ENCODE measurements at regions of chr9 and their contacts with region 1.

Region 1: DNA sequence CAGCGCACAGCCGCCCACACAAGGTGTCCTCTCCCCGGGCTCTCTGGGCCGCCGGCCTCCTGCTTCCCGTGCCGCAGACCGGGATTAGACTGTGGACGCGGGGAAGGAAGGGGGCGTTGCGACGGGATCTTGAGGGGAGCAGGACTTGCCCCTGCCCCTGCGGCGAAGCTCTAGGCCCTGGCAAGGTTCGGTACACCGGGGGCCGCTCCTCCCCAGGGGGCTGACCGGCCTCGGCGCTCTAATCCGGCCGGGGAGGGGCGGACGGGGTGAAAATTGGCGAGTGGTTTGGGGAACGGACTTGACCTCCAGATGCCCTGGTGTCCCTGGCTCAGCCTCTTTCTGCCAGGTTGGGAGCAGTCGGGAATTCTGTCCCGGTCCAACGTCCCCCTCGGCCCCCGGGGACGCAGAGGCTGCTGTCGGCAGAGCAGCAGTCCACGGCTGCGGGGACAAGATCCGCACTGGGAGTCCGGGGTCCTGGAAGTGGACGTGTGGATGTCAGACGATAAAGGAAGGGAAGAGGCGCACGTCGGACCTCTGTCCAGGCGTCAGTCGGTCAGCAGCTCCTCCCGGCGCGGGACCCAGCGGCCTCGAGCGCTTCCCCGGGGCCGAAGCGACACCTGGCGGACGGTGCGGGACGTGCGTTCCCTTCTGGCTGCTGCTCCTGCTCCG is 1.9 kb upstream of the CNTFR start:
- DNase-seq: peak; percentile 80 to 82
- H3K4me3 ChIP-seq: peak overlapping the region in 1 of 3 donors; percentile 18
- H3K27ac ChIP-seq: peak overlapping the region; percentile 34 to 62 (median 50)
- H3K4me1 ChIP-seq: peaks cover 12 to 39% of the 10 kb centered on the region in 2 donors
- H3K27me3 ChIP-seq: no peaks in the 10 kb centered on the region
- CTCF ChIP-seq: peak; percentile 63 to 93 (median 85)
- POLR2A ChIP-seq: no peak

Region 2: DNA sequence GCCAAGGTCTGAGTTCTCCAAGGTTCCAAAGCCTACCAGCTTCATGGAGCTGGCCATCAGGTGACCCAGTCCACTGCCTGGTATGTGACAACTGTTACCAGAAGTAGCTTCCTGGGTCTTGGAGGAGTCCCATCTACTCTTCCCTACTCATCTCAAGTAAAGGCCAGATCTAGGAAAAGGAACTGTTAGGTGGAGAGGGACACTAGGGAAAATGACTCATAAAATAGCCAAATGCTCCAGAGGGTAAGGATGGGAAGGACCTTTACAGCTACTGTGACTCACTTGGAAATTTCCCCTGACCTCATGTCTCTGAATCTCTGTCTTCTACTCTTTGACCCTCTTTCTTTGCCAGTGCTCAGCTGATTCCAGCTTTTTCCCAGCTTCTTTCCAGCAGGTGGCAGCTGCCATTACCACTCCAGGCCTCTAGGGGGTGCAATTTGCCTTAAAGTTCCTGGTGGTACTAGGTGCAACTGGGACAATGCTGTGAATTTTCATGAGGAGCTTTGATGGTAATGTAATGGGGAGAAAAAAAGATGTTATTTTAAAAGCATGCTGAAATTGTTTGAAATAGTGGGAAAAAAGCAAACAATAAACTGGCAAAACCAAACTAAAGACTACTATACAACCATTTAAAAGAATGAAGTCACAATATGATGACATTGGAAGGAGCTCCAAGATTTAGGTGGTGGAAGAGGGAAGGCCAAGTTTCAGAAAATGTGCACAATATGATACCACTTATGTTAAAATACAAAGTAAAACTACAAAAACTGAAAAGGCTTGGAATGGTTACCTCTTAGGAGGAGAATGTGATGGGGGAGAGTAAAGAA is 187.6 kb before region 1 on chr9:
- intact Hi-C with region 1: loop called (anchors 5 kb)
- DNase-seq: peak; percentile 68 to 71
- H3K4me3 ChIP-seq: no peak overlapping the region
- H3K27ac ChIP-seq: no peak overlapping the region
- H3K4me1 ChIP-seq: no peaks in the 10 kb centered on the region
- H3K27me3 ChIP-seq: no peaks in the 10 kb centered on the region
- CTCF ChIP-seq: peak; percentile 79 to 96 (median 88)
- POLR2A ChIP-seq: no peak

Region 3: DNA sequence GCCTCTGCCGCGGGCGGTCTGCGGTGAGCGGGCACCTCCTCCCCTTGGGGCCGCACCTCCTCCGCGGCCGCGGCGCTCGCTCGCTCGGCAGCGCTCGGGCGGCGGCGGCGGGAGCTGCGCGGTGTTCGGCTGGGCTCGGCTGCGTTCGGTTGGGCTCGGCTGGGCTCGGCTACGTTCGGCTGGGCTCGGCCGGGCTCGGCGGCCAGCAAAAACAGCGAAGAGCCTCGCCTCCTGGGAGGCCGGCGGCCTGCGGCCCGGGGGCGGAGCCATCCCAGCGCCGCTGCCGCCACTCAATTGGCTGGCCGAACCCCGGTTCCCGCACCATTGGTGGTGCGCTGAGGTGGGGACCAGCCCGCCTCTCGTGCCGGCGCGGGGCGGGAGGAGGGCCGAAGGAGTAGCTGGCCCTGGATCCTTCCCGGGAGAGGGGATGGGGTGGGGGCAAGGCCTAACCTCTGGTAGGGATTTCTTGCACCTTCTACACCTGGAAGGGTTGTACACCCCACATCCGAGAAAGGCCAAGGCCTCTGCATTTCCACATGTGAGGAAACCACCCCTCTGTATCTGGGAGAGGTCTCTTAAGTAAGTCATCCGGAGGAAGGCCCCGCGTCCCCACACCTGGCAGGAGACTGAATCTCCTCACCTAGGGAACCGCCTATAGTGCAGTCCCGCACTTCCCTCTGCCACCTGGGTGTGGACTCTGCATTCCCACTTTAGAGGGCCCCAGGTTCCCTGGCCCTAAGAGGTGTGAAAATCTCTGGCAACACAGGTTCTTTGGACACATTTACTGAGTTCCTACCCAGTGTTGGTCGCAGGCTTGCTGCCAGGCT is 68.2 kb before region 1 on chr9 and contains the start of gene ENHO:
- intact Hi-C with region 1: no loop called
- DNase-seq: peak; percentile 87 to 88
- H3K4me3 ChIP-seq: peak within 1 kb of the TSS in 1 of 3 donors; percentile 35
- H3K27ac ChIP-seq: no peak within 1 kb of the TSS
- H3K4me1 ChIP-seq: peaks cover 6 to 10% of the 10 kb centered on the region in 2 donors
- H3K27me3 ChIP-seq: no peaks in the 10 kb centered on the region
- CTCF ChIP-seq: peak in 1 of 6 experiments; percentile 10
- POLR2A ChIP-seq: no peak
- total RNA-seq, gene ENHO: not detected

Region 4: DNA sequence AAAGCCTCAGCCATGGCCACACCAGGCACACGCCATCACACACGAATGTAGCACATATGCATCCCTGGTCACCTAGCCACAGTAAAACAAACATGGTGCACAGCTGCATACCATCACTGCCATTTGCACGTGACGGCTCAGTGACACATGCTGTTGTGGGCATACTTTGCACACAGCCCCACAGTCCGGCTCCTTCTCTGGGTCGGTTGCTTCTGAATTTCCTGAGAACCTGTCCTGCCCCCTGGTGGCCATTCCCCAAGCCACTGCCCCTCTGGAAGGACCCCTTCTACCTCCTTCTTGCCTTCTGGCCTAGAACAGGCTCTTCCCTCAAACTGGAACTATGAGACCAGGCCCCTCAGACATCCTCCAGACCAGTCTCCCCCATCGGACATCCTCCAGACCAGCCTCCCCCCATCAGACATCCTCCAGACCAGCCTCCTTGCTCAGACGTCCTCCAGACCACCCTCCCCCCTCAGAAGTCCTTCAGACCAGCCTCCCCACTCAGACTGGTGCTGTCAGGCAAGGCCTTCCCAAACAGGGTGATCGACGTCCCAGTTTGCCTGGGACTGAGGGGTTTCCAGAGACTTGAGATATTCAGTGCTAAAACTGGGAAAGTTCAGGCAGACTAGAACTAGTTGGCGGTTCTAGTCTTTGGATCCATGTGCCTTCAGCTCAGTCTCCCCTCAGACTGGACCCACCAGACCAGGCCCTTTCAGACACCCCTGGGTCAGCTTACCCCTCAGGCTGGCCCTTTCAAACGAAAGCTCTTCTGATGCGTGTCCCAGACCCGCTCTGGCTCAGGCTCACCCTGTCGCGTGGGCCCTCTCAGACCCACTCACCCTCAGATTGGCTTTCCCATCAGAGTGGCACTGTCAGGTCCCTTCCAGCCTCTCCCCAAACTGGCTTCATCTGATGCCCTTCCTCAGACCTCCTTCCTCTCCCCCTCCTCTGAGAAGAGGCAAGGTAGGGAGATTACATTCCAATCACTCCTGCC is 44.3 kb before region 1 on chr9:
- intact Hi-C with region 1: loop called (anchors 5 kb)
- DNase-seq: peak; percentile 39 to 51
- H3K4me3 ChIP-seq: no peak overlapping the region
- H3K27ac ChIP-seq: no peak overlapping the region
- H3K4me1 ChIP-seq: no peaks in the 10 kb centered on the region
- H3K27me3 ChIP-seq: no peaks in the 10 kb centered on the region
- CTCF ChIP-seq: peak in 5 of 6 experiments; percentile 4 to 57 (median 38)
- POLR2A ChIP-seq: no peak

Measured in thyroid gland (tissue), 4 donors.